HepG2 (cell line): ENCODE measurements at regions of chr4 and their contacts with region 1.

Region 1: DNA sequence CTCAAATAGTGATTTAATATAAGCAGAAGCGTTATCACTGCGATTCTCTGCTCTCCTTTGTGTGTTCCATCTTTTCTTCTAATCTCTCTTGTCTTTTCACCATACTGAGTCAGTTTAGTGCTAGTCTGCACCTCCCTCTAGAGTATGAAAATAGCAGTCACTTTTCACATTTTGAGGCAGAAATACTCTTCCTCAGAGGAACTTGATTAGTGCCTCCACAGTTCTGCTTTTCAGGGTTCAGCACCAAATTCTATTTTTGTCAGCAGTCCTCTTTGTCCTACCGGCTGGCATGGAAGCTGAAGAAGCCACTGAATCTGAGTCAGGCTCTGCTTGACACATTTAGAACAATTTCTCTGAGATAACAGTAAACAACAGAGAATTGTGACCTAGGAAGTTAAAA is 49.7 kb upstream of the ANKRD17 start:
- DNase-seq: peak; percentile 24
- ATAC-seq: peak; percentile 87
- H3K4me3 ChIP-seq: no peak overlapping the region
- H3K27ac ChIP-seq: no peak overlapping the region
- H3K4me1 ChIP-seq: peaks cover 23% of the 10 kb centered on the region
- H3K27me3 ChIP-seq: no peaks in the 10 kb centered on the region
- CTCF ChIP-seq: peak; percentile 73
- EP300 ChIP-seq: no peak
- POLR2A ChIP-seq: no peak
- RAD21 ChIP-seq: 0 out of 2 replicates have a peak, but pooled peaks have one; percentile 22

Region 2: GRCh38 chr4:73258686-73259570 is 49.4 kb before region 1 on chr4 and contains the start of gene ANKRD17:
- CTCF ChIA-PET with region 1: no interaction called
- POLR2A ChIA-PET with region 1: no interaction called
- in situ Hi-C with region 1: no loop called
- intact Hi-C with region 1: loop called (anchors 1 kb)
- DNase-seq: peak; percentile 89
- ATAC-seq: peak; percentile 89
- H3K4me3 ChIP-seq: peak within 1 kb of the TSS; percentile 82 to 93 (median 83)
- H3K27ac ChIP-seq: peak within 1 kb of the TSS; percentile 99
- H3K4me1 ChIP-seq: peaks cover 45% of the 10 kb centered on the region
- H3K27me3 ChIP-seq: no peaks in the 10 kb centered on the region; a peak in 1 of 5 replicates
- CTCF ChIP-seq: peak; percentile 26; the same call in 1 of the 2 replicates
- EP300 ChIP-seq: peak in 1 of 2 experiments; percentile 55; a peak in 1 of 4 replicates
- POLR2A ChIP-seq: peak; percentile 88 to 96
- RAD21 ChIP-seq: peak; percentile 50
- total RNA-seq, gene ANKRD17: 61.1 and 97.9 TPM in 2 replicates

Region 3: DNA sequence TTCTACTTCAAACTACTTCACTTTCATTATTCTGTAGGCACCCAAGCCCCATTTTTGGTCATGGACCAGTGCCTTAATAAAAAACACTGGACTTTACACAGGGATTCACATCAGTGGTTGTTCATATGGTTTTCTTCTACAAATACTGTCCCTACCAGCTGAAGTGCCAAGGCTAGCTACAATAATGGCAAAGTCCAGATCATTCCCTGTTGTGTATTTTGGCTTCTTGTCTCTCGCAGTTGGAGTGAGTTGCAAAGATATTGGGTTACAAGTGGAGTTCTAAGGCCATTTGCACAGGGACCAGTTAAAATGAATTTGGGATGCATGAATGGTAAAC is 33.0 kb before region 1 on chr4:
- CTCF ChIA-PET with region 1: no interaction called
- POLR2A ChIA-PET with region 1: no interaction called
- in situ Hi-C with region 1: no loop called
- intact Hi-C with region 1: no loop called
- DNase-seq: peak; percentile 57
- ATAC-seq: peak; percentile 93
- H3K4me3 ChIP-seq: no peak overlapping the region
- H3K27ac ChIP-seq: no peak overlapping the region
- H3K4me1 ChIP-seq: peaks cover 16% of the 10 kb centered on the region
- H3K27me3 ChIP-seq: no peaks in the 10 kb centered on the region
- CTCF ChIP-seq: no peak
- EP300 ChIP-seq: no peak
- POLR2A ChIP-seq: no peak
- RAD21 ChIP-seq: no peak

Region 4: DNA sequence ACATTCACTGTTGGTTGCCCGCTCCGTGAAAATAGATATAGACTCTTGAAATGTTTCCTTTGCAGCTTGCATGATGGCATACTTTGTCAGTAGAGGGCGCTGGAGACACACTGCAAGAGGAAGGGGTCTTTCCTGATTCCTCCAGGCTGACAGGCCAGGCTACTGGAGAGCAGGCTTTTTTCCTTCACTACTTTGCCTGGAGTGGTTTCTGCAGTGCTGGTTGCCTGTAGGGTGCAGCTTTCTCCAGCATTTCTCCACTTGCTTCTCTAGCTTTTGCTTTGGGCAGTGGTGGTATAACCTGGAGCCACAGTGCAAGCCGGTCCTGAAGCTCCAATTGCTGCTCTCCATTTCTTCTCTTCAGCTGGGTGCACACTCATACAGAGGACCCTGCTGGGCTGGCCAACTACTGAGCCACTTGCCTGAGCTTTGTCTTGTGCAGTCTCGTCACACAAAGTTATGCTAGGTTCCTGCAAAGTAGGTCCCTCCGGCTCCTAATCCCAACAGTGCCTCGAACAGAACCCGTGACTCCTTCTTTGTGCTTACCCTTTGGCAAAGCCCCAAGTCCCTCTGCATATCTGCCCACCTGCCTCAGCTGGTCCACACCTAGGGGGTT is 265.6 kb after region 1 on chr4:
- CTCF ChIA-PET with region 1: interaction called, 7 read pairs
- POLR2A ChIA-PET with region 1: no interaction called
- in situ Hi-C with region 1: no loop called
- intact Hi-C with region 1: loop called (anchors 5 kb)
- DNase-seq: peak; percentile 79
- ATAC-seq: peak; percentile 97
- H3K4me3 ChIP-seq: no peak overlapping the region
- H3K27ac ChIP-seq: no peak overlapping the region
- H3K4me1 ChIP-seq: no peaks in the 10 kb centered on the region
- H3K27me3 ChIP-seq: no peaks in the 10 kb centered on the region
- CTCF ChIP-seq: peak; percentile 92
- EP300 ChIP-seq: no peak
- POLR2A ChIP-seq: no peak
- RAD21 ChIP-seq: peak; percentile 89

Region 5: DNA sequence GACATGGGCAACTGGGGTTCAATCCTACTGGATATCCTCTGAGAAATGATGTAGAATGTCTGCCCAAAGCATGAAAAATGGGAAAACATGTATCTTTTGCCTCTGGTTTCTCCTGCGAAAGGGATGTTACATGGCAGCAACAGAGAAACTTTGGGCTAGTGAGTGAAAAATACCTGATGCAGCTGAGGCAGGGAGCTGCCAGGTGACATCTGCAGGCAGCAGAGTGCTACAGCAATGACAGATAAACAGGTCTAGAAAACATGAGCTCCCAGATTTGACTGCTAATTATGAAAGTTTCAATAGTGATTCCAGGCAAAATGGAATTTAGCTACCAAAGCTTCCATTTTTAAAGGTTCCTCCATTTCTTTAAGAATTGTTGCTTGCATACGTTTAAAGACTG is 556.1 kb after region 1 on chr4:
- CTCF ChIA-PET with region 1: no interaction called
- POLR2A ChIA-PET with region 1: no interaction called
- in situ Hi-C with region 1: no loop called
- intact Hi-C with region 1: loop called (anchors 5 kb)
- DNase-seq: peak; percentile 11
- ATAC-seq: peak; percentile 81
- H3K4me3 ChIP-seq: no peak overlapping the region
- H3K27ac ChIP-seq: no peak overlapping the region
- H3K4me1 ChIP-seq: peaks cover 8% of the 10 kb centered on the region; the same call in 1 of the 2 replicates
- H3K27me3 ChIP-seq: peaks cover 0 to 9% of the 10 kb centered on the region in 2 experiments; a peak in 2 of 5 replicates
- CTCF ChIP-seq: peak; percentile 43
- EP300 ChIP-seq: no peak
- POLR2A ChIP-seq: no peak
- RAD21 ChIP-seq: no peak